ENCODE measurements at regions of chr7 and their contacts with region 1.

Region 1: DNA sequence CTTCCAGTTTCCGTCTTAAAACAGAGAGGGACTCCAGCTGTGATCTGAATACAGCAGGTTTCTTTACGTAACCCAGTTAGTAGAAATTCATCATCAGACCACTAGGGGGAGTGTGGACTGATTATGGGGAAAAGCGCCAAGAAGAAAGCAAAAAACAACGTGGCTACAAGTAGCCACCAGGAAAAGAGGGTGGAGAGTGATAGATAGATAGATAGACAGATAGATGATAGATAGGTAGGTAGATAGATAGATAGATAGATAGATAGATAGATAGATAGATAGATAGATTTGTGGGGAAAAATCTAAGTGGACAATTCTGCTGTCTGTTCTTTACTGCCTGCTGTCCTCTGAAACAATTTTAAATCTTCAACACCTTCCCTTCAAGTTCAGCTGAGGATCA is 12.7 kb upstream of the AKR1B10 start:
- DNase-seq: no peak

Region 2: GRCh38 chr7:134444198-134444871 is 70.3 kb before region 1 on chr7:
- intact Hi-C with region 1: loop called (anchors 2 kb)
- DNase-seq: no peak

Region 3: DNA sequence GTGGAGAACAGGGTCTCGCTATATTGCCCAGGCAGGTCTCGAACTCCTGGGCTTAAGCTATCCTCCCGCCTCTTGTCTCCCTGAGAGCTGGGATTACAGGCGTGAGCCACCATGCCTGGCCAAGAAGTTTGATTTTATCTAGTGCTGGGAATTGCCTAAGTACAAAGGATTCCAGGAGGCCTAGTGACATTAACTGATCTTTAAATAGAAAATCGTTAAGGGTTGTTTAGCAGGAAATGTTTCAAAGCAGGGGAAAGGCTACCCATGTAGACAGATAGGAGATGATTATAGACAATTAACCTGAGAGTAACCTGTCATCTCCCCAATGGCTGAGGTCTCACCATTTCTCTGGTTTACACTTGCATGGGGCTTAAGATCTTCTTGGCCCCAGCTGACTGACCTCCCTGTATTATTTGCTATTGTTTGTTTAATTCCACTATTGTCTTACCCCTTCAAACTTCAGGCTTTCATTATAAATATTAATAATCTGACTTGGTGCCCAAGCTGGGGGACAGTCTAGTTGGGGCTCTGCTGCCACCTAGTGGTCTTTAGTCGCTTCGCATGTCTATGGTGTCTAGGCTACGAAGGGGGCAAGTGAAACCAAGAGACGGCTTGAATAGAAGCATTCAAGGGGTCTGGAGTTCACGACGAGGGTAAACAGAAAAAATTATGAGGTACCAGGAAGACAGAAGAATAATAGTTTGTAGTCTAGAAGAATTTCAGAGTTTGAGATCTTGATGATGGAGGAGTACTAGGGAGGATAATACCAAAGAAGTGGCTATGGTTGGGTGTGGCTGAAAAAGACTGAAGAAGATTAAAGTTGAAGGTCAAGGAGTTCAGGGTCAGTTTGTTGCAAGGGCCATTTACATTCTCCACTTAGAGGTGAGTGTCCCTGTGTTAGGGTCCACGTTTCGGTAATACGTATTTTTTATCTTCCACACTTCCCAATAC is 91.6 kb after region 1 on chr7:
- intact Hi-C with region 1: loop called (anchors 2 kb)
- DNase-seq: peak; percentile 78